GM18951 (cell line): ENCODE measurements at regions of chr22 and their contacts with region 1.

Region 1: GRCh38 chr22:45984316-45984916 is 7.5 kb upstream of the WNT7B start:
- POLR2A ChIP-seq: no peak

Region 2: DNA sequence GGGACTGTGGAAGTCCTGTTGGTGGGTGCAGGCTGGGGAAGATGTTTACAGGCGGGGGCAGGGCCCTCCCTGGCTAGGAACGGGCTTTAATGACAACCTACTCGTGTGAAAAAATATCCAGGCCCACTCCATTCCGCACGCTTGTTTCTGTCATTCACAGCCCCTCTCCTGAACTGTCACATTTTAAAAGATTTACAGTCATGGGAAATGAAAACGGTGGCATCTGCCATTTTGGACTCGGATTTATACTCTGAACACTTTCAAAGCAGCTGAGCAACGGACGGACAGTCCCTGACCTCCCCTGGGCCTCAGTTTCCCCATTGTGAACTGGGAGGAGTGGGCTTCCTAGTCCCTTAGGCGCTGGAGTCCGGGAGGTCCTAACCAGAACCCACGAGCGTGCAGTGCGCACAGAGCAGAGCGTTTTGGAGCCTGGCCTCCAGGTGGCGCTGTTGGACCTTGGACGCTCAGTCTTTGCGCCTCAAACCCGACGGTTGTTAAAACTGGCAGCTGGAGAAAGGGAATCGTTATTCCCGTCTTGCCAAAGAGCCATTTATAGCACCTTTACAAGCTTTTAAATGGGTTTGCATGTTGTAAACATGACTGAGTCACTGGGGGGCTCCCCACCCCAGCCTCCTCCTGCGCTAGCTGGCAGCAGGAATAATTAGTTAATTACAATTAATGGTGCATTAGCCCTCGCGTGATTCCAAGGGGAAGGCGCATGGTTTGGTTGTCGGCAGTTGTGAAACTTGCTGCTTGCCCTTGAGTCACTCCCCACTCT is 406.5 kb before region 1 on chr22:
- in situ Hi-C with region 1: loop called (anchors 10 kb)
- POLR2A ChIP-seq: no peak

Region 3: GRCh38 chr22:45645526-45646414 is 338.6 kb before region 1 on chr22:
- in situ Hi-C with region 1: loop called (anchors 10 kb)
- POLR2A ChIP-seq: no peak

Region 4: GRCh38 chr22:46303347-46303965 is 319.0 kb after region 1 on chr22:
- in situ Hi-C with region 1: loop called (anchors 10 kb)
- POLR2A ChIP-seq: no peak